Dendritic cell treated with granulocyte-macrophage colony-stimulating factor and Interleukin-4, amounts not matched to agents 40 ng/mL and 50 ng/mL, for 4 days (primary cell): ENCODE measurements at regions of chr6 and their contacts with region 1.

Region 1: GRCh38 chr6:30259140-30260035 is 46.2 kb upstream of the TRIM26 start:
- H3K4me3 Mint-ChIP-seq: peak overlapping the region; percentile 85
- H3K27ac Mint-ChIP-seq: peak overlapping the region; percentile 93
- H3K4me1 Mint-ChIP-seq: peaks cover 52% of the 10 kb centered on the region
- H3K27me3 Mint-ChIP-seq: peaks cover 31% of the 10 kb centered on the region

Region 2: GRCh38 chr6:30219244-30219643 is 40.1 kb before region 1 on chr6:
- intact Hi-C with region 1: loop called (anchors 5 kb)
- H3K4me3 Mint-ChIP-seq: no peak overlapping the region
- H3K27ac Mint-ChIP-seq: no peak overlapping the region
- H3K4me1 Mint-ChIP-seq: peaks cover 13% of the 10 kb centered on the region
- H3K27me3 Mint-ChIP-seq: peaks cover 22% of the 10 kb centered on the region

Region 3: GRCh38 chr6:30326526-30327260 is 67.3 kb after region 1 on chr6 and contains the start of gene TRIM39:
- intact Hi-C with region 1: loop called (anchors 1 kb)
- H3K4me3 Mint-ChIP-seq: peak within 1 kb of the TSS; percentile 86
- H3K27ac Mint-ChIP-seq: peak within 1 kb of the TSS; percentile 99
- H3K4me1 Mint-ChIP-seq: peaks cover 52% of the 10 kb centered on the region
- H3K27me3 Mint-ChIP-seq: no peaks in the 10 kb centered on the region